CD4-positive, alpha-beta T cell (primary cell): ENCODE measurements at regions of chr12 and their contacts with region 1.

Region 1: GRCh38 chr12:47797441-47797840 is 22.3 kb downstream of the HDAC7 start:
- DNase-seq: peak in 9 of 14 experiments; percentile 17 to 69 (median 44)
- ATAC-seq: peak; percentile 80
- H3K4me3 ChIP-seq: no peak overlapping the region
- H3K4me3 Mint-ChIP-seq: no peak overlapping the region
- H3K27ac ChIP-seq: peak overlapping the region in 1 of 2 donors; percentile 11
- H3K27ac Mint-ChIP-seq: peak overlapping the region; percentile 83
- H3K4me1 ChIP-seq: peaks cover 47% of the 10 kb centered on the region
- H3K4me1 Mint-ChIP-seq: peaks cover 34% of the 10 kb centered on the region
- H3K27me3 ChIP-seq: no peaks in the 10 kb centered on the region
- H3K27me3 Mint-ChIP-seq: no peaks in the 10 kb centered on the region
- CTCF ChIP-seq: peak; percentile 40

Region 2: DNA sequence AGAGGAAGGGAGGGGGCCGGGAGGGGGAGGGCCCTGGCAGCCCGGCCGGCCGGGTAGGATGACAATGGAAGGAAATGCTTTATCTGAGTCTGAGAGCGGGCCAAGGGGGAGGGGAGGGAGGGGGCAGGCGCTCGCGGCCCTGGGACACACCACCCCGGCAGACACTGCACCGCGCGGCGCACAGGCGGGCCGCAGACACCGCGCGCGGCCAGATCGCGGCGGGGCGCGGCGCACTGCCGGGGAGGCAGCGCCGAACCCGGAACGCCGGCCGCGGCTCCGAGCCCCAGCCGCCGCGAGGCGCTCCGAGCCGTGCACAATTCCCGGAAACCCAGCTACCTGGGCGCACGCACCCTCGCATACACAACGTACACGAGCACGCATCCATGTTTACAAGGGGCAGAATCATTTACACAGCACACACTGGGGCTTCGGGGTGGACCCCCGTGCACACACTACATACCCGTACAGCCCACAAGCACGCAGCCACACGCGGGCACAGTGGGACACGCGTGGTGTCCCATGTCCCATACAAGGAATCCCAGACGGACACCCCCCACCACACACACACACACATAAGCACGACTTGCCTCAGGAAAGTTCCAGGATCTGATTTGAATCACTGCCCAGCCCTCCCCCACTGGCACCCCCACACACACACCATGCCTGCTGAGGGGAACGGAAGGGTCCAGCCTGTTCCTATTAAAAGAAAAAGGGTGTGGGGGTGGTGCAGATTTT is 22.6 kb after region 1 on chr12 and contains the start of gene HDAC7:
- CTCF ChIA-PET with region 1: interaction called, 16 read pairs
- POLR2A ChIA-PET with region 1: interaction called, 12 read pairs
- intact Hi-C with region 1: no loop called
- DNase-seq: peak in 13 of 14 experiments; percentile 62 to 90 (median 78)
- ATAC-seq: peak; percentile 59
- H3K4me3 ChIP-seq: peak within 1 kb of the TSS; percentile 89
- H3K4me3 Mint-ChIP-seq: peak within 1 kb of the TSS; percentile 98
- H3K27ac ChIP-seq: peak within 1 kb of the TSS; percentile 84 to 89
- H3K27ac Mint-ChIP-seq: peak within 1 kb of the TSS; percentile 96
- H3K4me1 ChIP-seq: peaks cover 81% of the 10 kb centered on the region
- H3K4me1 Mint-ChIP-seq: peaks cover 89% of the 10 kb centered on the region
- H3K27me3 ChIP-seq: no peaks in the 10 kb centered on the region
- H3K27me3 Mint-ChIP-seq: no peaks in the 10 kb centered on the region
- CTCF ChIP-seq: no peak
- total RNA-seq, gene HDAC7: 116 to 122 TPM